OCI-LY7 (cell line): ENCODE measurements at regions of chr2 and their contacts with region 1.

Region 1: DNA sequence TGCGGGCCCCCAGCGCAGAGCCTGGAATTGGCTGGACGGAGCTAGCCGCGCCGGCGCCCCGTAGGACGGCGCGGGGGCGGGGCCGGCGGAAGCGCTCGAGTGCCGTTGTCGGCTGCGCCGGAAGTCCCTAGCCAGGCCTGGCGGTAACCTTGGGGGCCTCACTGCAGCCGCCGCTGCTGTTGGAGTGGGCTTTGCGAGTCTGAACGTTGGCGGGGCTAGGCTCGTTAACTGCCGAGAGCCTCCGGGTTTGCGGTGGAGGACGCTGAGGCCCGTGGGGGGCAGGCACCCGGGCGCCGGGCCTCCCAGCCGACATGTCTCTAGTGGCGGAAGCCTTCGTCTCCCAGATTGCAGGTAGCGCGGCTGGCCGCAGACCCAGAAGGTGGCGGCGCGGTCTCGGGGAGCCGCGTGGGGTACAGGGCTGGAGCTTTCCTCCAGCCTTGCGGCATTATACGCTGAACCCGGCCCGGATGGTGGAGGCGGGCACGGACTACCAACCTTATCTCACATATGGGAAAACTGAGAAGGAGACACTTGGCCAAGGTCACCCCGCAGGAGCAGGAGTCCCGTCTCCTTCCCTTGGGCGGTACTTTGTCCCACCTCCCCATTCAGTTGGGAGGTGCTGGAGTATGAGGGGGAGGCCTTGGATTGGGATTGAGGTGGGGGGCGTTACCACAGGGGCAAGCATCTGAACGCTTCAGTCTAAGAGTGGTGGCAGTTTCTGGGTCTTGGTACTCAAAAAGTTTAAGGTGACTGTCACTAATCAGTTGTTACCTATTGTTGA is at the start of gene MTX2:
- DNase-seq: peak; percentile 86
- H3K4me3 ChIP-seq: peak within 1 kb of the TSS; percentile 97
- H3K27ac ChIP-seq: peak within 1 kb of the TSS; percentile 76
- H3K4me1 ChIP-seq: peaks cover 8% of the 10 kb centered on the region
- CTCF ChIP-seq: peak; percentile 28; the same call in 1 of the 2 replicates
- total RNA-seq, gene MTX2: 36.8 and 71.3 TPM in 2 replicates

Region 2: GRCh38 chr2:176001916-176002687 is 267.4 kb before region 1 on chr2 and contains the start of gene LNPK:
- CTCF ChIA-PET with region 1: no interaction called
- POLR2A ChIA-PET with region 1: no interaction called
- intact Hi-C with region 1: loop called (anchors 10 kb)
- DNase-seq: peak; percentile 89
- H3K4me3 ChIP-seq: peak within 1 kb of the TSS; percentile 95
- H3K27ac ChIP-seq: peak within 1 kb of the TSS; percentile 42
- H3K4me1 ChIP-seq: peaks cover 19% of the 10 kb centered on the region
- CTCF ChIP-seq: no peak
- total RNA-seq, gene LNPK: 14.0 and 18.0 TPM in 2 replicates

Region 3: DNA sequence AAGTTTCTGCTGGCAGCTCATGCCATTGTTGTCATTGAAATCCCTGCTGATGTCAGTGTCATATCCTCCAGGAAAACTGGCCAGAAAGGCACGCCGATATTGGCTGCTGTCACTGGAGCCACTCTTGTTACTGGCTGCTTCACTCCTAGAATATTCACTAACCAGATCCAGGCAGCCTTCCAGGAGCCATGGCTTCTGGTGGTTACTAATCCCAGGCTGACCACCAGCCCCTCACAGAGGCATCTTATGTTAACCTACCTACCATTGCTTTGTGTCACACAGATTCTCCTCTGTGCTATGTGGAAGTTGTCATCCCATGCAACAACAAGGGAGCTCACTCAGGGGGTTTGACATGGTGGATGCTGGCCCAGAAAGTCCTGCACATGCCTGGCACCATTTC is 27.2 kb before region 1 on chr2:
- CTCF ChIA-PET with region 1: no interaction called
- POLR2A ChIA-PET with region 1: interaction called, 10 read pairs
- intact Hi-C with region 1: no loop called
- DNase-seq: no peak
- H3K4me3 ChIP-seq: no peak overlapping the region
- H3K27ac ChIP-seq: no peak overlapping the region
- H3K4me1 ChIP-seq: no peaks in the 10 kb centered on the region
- CTCF ChIP-seq: no peak